ENCODE measurements at regions of chr9 and their contacts with region 1.

Region 1: DNA sequence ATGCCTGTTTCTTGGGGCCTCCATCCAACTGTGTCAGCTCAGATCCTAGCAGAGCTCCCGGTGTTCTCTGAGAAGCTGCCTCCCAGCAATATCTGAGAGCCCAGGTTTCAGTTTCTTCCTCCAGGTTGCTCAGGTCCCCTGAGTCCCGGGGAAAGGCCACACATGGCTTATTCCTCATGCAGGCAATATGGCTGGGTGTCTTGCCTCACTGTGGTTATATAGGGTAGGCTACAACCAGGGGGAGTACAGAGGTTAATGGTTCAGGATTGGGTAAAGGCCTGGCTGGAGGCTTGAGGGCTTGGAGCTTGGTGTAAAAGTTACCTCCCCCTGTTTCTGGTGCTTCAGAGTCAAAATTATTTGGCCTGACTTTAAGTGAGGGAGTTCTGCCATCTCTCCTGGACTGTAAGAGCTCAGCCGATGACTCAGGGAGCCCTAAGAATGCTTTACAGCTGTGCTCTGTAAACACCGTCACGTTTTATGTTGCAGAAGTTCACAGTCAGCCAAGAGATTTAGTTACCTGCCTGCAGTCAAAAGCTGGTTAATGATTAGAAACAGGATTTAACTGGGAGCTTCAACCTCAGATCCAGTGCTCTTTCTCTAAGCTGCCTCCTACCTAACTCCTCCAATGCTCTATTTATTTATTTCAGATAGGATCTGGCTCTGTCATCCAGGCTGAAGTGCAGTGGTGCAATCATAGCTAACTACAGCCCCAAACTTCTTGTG is 24.3 kb upstream of the UBAP2 start:
- DNase-seq: no peak
- H3K4me3 ChIP-seq: no peak overlapping the region
- H3K27ac ChIP-seq: no peak overlapping the region
- H3K4me1 ChIP-seq: no peaks in the 10 kb centered on the region
- H3K27me3 ChIP-seq: no peaks in the 10 kb centered on the region
- CTCF ChIP-seq: no peak
- POLR2A ChIP-seq: no peak

Region 2: DNA sequence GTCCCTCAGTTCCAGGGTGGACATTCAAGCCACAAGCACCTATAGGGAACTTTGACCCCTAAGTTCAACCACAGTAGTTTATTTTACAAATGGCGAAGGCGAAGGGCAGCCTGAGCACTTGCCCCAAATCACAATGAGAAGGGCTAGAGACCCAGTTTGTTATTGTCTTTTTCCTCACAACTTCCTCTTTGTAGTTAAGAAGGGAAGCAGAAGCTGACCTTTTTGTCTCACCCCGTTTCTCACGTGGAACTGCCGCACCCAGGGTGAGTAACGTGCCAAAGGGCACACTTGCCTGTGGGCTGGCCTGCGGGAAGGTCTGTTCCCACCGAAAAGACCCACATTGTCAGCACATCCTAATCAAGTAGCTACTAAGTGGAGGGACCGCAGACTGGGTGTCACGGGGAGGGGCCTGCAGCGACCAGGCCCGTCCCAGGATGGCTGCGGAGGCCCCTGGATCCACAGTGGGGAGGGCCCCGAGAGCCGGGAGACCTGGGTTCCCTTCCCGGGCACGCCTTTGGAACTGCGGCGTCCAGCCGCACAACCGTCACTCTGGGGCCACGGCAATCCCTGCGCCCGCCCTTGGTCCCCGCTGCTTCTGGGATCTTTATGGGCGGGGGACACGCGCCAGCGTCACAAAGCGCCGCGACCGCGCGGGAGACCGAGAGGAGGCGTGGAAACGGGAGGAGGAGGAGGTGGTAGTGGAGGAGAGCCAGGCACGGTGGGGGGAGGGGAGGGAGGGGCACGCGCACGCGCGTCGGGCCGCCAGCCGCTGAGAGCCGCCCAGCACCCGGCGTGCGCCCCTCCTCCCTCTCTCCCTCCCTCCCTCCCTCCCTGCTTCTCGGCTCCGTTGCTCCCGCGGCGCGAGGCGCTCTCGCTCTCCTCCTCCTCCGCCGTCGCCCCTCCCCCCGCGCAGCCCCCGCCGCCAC is 256.4 kb before region 1 on chr9 and contains the start of gene UBE2R2:
- CTCF ChIA-PET with region 1: interaction called, 33 read pairs
- POLR2A ChIA-PET with region 1: no interaction called
- dilution Hi-C with region 1: no loop called
- intact Hi-C with region 1: loop called (anchors 1 kb)
- DNase-seq: peak; percentile 93
- H3K4me3 ChIP-seq: peak within 1 kb of the TSS; percentile 67 to 97 (median 83)
- H3K27ac ChIP-seq: peak within 1 kb of the TSS; percentile 95
- H3K4me1 ChIP-seq: peaks cover 42% of the 10 kb centered on the region
- H3K27me3 ChIP-seq: no peaks in the 10 kb centered on the region
- CTCF ChIP-seq: no peak
- POLR2A ChIP-seq: peak; percentile 70
- total RNA-seq, gene UBE2R2: 51.5 and 54.3 TPM in 2 replicates

Region 3: DNA sequence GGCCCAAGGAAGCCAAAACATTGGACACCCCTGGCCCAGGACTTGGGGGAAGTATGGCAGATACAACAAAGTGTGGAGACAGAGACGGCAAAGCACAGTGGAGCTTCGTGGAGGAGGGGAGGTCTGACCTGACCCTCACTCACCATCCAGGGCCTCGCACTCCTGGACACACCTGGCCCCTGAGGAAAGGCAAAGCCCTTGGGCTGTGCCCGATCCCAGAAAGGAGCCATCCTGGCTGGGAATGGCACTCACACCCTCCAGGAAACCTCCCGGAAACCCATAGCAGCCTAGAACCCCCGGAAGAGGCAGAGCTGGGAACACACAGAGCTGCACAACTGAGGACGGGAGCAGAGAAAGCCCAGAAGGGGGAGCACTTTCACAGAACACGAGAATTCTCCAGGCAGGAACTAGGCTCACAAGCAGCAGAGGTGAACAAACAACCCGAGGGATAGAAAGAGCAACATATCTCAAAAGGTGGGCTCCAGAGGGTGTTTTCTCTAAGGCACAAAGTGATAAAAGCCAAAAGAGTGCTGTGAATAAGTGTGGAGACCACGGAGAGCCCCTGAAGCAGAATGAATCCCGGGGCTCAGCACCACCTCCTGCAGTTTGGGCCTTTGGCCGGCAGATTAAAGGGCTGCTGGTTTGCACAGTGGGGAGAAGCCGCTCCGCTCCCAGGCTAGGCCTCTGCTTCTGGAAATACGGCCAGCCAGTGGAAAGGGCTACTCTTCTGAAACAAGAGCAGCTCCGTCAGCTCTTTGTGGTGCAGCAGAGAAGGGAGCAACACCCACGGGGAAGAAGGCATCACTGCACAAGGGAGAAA is 147.8 kb before region 1 on chr9:
- CTCF ChIA-PET with region 1: interaction called, 74 read pairs
- POLR2A ChIA-PET with region 1: interaction called, 4 read pairs
- dilution Hi-C with region 1: no loop called
- intact Hi-C with region 1: loop called (anchors 1 kb)
- DNase-seq: peak; percentile 61
- H3K4me3 ChIP-seq: no peak overlapping the region
- H3K27ac ChIP-seq: no peak overlapping the region
- H3K4me1 ChIP-seq: no peaks in the 10 kb centered on the region
- H3K27me3 ChIP-seq: no peaks in the 10 kb centered on the region
- CTCF ChIP-seq: peak; percentile 70 to 79
- POLR2A ChIP-seq: no peak

Region 4: DNA sequence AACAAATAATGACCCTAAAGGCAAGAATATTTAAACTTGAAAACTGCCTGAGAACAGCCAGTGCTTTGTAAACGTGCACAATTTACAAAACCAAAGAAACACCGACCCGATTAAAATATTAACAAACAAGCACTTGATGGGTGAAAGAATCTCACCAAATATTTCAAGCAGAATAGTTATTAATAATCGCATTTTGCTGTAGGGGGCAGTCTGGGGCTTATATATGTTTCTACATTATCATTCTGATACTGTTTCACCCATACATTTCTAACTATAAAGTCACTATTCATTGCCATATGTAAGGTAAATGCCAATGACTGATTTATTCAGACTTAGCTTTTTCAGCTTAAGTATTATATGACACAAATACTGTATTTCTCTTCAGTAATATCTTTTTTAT is 62.0 kb before region 1 on chr9:
- CTCF ChIA-PET with region 1: interaction called, 49 read pairs
- POLR2A ChIA-PET with region 1: no interaction called
- dilution Hi-C with region 1: no loop called
- intact Hi-C with region 1: loop called (anchors 1 kb)
- DNase-seq: peak; percentile 27
- H3K4me3 ChIP-seq: no peak overlapping the region
- H3K27ac ChIP-seq: no peak overlapping the region
- H3K4me1 ChIP-seq: no peaks in the 10 kb centered on the region
- H3K27me3 ChIP-seq: no peaks in the 10 kb centered on the region
- CTCF ChIP-seq: peak in 1 of 2 donors; percentile 10
- POLR2A ChIP-seq: no peak

Region 5: DNA sequence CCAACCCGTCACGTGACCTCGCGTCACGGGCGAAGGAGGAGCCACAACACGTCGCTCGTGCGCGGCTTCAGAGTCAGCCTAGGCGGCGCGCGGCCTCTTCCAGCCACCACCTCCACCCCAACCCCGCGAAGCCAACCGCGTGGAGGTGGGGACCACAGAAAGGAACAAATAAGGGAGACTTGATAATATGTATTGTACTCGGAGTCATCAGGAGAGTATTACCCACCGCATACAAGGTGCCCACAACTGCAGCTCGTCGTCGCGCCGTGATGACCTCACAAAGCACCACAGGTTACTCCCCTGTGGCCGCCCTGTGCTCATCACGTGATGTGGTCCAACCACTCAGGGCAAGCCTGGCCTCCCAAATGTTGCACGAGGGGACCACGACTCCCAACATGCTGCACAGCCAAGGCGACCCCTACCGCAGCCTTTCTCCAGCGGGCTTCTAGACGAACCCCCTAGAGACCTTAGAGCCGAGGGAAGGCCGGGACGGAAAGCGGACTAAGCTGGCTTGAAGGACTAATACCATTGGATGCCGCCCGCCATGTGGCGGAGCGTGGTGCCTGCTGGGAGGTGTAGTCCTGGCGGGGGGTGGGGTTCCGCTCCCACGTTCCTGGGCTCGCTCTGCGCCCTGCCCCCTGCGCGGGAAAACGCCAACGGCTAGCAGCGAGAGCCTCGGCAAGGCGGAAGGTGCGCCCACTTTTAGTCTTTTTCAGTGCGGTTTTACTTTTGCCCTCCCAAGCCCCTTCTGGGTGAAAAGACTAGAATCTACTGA is 23.9 kb before region 1 on chr9:
- CTCF ChIA-PET with region 1: interaction called, 9 read pairs
- POLR2A ChIA-PET with region 1: interaction called, 3 read pairs
- dilution Hi-C with region 1: no loop called
- intact Hi-C with region 1: loop called (anchors 1 kb)
- DNase-seq: peak; percentile 99
- H3K4me3 ChIP-seq: peak overlapping the region; percentile 70 to 86 (median 81)
- H3K27ac ChIP-seq: peak overlapping the region; percentile 77
- H3K4me1 ChIP-seq: peaks cover 22% of the 10 kb centered on the region
- H3K27me3 ChIP-seq: no peaks in the 10 kb centered on the region
- CTCF ChIP-seq: no peak
- POLR2A ChIP-seq: peak; percentile 32

Region 6: GRCh38 chr9:34119713-34120112 is 46.7 kb after region 1 on chr9:
- CTCF ChIA-PET with region 1: interaction called, 11 read pairs
- POLR2A ChIA-PET with region 1: no interaction called
- dilution Hi-C with region 1: no loop called
- intact Hi-C with region 1: no loop called
- DNase-seq: no peak
- H3K4me3 ChIP-seq: no peak overlapping the region
- H3K27ac ChIP-seq: no peak overlapping the region
- H3K4me1 ChIP-seq: peaks cover 2% of the 10 kb centered on the region
- H3K27me3 ChIP-seq: no peaks in the 10 kb centered on the region
- CTCF ChIP-seq: no peak
- POLR2A ChIP-seq: no peak

Region 7: GRCh38 chr9:34252670-34253459 is 179.8 kb after region 1 on chr9:
- CTCF ChIA-PET with region 1: interaction called, 15 read pairs
- POLR2A ChIA-PET with region 1: no interaction called
- dilution Hi-C with region 1: no loop called
- intact Hi-C with region 1: no loop called
- DNase-seq: peak; percentile 52
- H3K4me3 ChIP-seq: no peak overlapping the region
- H3K27ac ChIP-seq: no peak overlapping the region
- H3K4me1 ChIP-seq: no peaks in the 10 kb centered on the region
- H3K27me3 ChIP-seq: no peaks in the 10 kb centered on the region
- CTCF ChIP-seq: peak; percentile 80 to 83
- POLR2A ChIP-seq: no peak

Measured in endothelial cell of umbilical vein (primary cell).